ENCODE measurements at regions of chr9 and their contacts with region 1.

Region 1: DNA sequence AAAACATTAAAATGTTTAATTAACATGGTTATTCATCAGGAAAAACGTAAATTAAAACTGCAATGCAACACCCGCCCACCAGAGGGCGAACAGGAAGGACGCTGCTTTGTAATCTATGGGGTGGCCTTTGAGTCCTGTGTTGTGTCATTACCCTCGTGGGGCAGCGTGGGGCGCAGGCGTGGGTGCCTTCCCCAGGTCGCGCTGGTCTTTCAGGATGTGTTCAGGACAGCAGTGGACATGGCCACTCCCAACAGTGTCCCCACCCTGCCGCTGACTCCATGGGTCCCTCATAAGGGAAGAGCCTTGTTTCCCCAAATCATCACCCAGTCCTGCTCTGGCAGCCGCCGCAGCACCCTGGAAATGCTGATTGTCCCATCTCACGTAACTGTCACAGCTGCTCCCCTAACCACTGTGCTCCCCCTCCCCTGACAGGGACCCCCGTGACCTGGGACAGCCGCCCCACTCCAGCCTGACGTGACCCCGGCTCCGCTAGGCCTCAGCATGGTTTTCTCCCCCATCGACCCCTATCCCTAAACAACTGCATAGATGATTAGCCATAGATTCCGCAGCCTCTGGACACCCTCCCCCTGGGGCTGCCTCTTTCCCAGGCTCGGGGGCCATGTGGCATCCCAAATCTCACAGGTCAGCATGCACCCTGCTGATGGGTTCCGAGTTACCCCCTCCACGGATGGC is 36.4 kb downstream of the GLT6D1 start:
- DNase-seq: peak; percentile 68
- H3K4me3 ChIP-seq: no peak overlapping the region; a peak in 1 of 4 replicates
- H3K27ac ChIP-seq: no peak overlapping the region
- H3K4me1 ChIP-seq: peaks cover 0 to 4% of the 10 kb centered on the region in 2 experiments; a peak in 1 of 4 replicates
- H3K27me3 ChIP-seq: no peaks in the 10 kb centered on the region
- CTCF ChIP-seq: peak; percentile 66
- EP300 ChIP-seq: no peak
- RAD21 ChIP-seq: peak; percentile 35

Region 2: DNA sequence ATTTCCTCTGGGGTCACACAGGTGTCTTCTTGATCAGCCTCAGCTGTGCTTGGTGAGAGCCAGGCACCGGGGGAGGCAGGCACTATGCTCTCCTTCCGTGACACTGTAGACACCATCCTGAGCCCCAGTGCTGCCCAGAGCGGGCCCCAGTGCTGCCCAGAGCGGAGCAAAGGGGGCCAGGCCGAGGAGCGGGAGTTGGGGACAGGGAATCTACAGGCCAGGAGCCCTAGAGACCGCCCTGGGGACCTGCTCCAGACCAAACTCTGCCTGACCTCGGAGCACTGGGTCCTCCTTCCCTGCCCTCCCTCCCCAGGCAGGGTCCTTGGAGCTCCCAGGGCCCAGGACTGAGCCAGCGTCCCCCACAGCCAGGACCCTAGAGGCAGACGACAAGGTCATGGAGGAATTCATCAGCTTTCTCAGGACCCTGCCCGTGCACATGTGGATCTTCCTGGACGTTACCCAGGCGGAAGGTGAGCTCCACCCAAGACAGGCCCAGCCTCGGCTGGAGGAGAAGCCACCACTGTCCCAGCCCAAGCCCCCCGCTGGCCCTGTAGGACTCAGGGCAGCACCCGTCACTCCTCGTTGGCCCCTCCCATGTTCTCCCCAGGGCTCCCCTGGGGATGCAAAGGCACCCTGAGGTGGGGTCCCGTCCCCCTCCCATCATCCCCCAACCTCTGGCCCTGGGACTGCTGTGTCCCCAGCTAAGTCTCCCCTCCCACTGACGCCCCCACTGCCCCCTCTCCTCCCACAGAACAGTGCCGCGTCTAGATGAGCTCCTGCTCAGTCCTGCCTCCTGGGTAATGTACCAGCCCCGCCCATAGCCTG is 11.2 kb before region 1 on chr9:
- CTCF ChIA-PET with region 1: interaction called, 19 read pairs
- POLR2A ChIA-PET with region 1: no interaction called
- DNase-seq: no peak
- H3K4me3 ChIP-seq: no peak overlapping the region
- H3K27ac ChIP-seq: no peak overlapping the region
- H3K4me1 ChIP-seq: peaks cover 0 to 4% of the 10 kb centered on the region in 2 experiments; a peak in 1 of 4 replicates
- H3K27me3 ChIP-seq: no peaks in the 10 kb centered on the region
- CTCF ChIP-seq: no peak
- EP300 ChIP-seq: no peak
- RAD21 ChIP-seq: no peak

Region 3: GRCh38 chr9:135615666-135616618 is 13.0 kb after region 1 on chr9:
- CTCF ChIA-PET with region 1: interaction called, 44 read pairs
- POLR2A ChIA-PET with region 1: no interaction called
- DNase-seq: peak; percentile 57
- H3K4me3 ChIP-seq: no peak overlapping the region
- H3K27ac ChIP-seq: no peak overlapping the region
- H3K4me1 ChIP-seq: peaks cover 0 to 9% of the 10 kb centered on the region in 2 experiments; a peak in 1 of 4 replicates
- H3K27me3 ChIP-seq: no peaks in the 10 kb centered on the region
- CTCF ChIP-seq: no peak
- EP300 ChIP-seq: no peak
- RAD21 ChIP-seq: no peak

Measured in SK-N-SH (cell line).